Motor neuron (in vitro differentiated cells): ENCODE measurements at regions of chr12 and their contacts with region 1.

Region 1: GRCh38 chr12:122749569-122750373 is 2.9 kb upstream of the DENR start:
- ATAC-seq: no peak
- H3K4me3 ChIP-seq: no peak overlapping the region
- H3K27ac ChIP-seq: no peak overlapping the region
- H3K4me1 ChIP-seq: peaks cover 9 to 18% of the 10 kb centered on the region in 2 donors

Region 2: DNA sequence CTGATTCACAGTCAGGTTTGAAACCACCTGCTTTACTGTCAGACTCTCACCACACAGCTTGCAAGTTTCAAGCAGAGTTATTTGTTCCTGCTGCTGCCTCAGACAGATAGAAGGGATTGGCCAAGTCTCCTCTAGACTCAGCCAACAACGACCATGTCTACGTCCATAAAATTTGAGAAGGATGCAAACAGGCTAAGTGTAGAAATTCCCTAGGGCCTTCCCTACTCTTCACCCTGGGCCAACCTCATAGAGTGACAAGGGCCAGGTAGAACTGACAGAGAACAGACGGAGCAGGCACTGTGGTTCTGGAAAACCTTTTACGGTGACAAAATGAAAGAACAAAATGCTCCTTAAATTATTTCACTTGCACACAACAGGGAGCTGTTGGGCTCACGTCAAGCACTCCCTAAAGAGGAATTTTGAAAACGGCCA is 366.8 kb before region 1 on chr12:
- in situ Hi-C with region 1: no loop called
- ATAC-seq: no peak
- H3K4me3 ChIP-seq: no peak overlapping the region
- H3K27ac ChIP-seq: no peak overlapping the region
- H3K4me1 ChIP-seq: peaks cover 0 to 12% of the 10 kb centered on the region in 2 donors

Region 3: GRCh38 chr12:122635471-122635870 is 114.3 kb before region 1 on chr12:
- in situ Hi-C with region 1: loop called in 2 of 9 experiments (anchors 10 to 25 kb)
- ATAC-seq: no peak
- H3K4me3 ChIP-seq: no peak overlapping the region
- H3K27ac ChIP-seq: no peak overlapping the region
- H3K4me1 ChIP-seq: peaks cover 0 to 2% of the 10 kb centered on the region in 2 donors

Region 4: DNA sequence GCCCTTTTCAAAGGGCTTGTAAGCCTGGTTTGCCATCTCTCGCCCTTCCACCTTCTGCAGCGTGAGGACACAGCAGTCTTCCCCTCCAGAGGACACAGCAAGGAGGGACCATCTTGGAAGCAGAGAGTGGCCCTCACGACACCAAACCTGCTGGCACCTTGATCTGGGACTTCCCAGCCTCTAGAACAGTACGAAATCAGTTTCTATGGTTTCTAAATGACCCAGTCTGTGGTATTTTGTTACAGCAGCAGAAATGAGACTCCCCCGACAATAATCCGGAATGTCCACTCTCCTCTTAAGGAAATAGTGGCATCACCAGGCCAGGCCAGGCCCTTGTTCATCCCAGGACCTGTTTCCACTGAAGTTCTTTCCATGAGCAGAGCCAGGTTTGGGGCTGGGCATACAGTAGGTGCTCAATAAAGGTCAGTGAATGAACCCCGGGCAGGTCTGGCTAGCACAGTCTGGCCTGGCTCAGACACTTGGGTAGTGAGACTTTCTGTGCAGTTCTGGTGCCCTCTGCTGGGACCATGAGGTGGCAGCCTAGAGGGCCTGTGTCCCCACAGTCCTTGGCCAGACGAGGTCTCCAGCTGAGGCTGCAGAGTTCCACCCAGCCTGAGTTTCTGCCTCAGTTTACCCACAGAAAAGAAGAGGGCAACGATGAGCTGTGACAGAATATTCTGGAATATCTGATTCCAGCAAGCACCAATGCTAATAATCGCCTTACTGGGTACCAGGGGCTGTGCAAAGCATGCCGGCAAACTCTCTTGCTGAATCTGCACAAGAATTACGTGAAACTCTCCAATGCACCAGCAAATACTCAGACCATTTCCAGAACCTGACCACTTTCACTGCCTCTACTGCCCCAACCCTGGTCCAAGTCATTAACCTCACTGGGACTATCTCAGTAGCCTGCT is 202.5 kb after region 1 on chr12:
- in situ Hi-C with region 1: no loop called
- ATAC-seq: peak; percentile 90 to 100 (median 94)
- H3K4me3 ChIP-seq: no peak overlapping the region
- H3K27ac ChIP-seq: no peak overlapping the region
- H3K4me1 ChIP-seq: no peaks in the 10 kb centered on the region